H1 (cell line): ENCODE measurements at regions of chr3 and their contacts with region 1.

Region 1: GRCh38 chr3:148880681-148881080 is 15.6 kb downstream of the CPA3 start:
- DNase-seq: no peak
- H3K4me3 ChIP-seq: no peak overlapping the region
- H3K27ac ChIP-seq: no peak overlapping the region
- H3K4me1 ChIP-seq: no peaks in the 10 kb centered on the region
- H3K27me3 ChIP-seq: no peaks in the 10 kb centered on the region
- CTCF ChIP-seq: peak in 2 of 3 experiments; percentile 55 to 68; a peak in 3 of 4 replicates
- EP300 ChIP-seq: no peak
- POLR2A ChIP-seq: no peak
- RAD21 ChIP-seq: peak; percentile 83 to 85

Region 2: DNA sequence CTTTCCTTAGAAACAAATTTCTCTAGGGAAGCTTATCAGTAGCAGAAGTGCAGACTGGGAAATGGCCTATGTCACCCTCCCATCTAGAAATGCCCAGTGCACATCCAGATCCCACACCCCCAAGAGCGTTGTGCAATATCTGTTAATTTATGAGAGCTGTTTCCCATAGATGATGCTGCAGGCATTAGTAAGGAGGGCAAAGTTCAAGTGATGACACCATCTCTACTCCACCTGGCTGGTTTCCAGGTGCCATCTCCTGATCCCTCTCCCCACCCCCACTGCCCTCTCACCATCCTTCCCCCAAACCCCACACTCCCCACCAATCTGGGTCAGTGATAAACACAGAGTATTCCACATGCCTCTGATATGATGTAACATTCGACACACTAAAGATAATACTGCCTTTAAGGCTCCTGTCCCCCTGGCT is 143.6 kb before region 1 on chr3:
- CTCF ChIA-PET with region 1: interaction called, 17 read pairs
- POLR2A ChIA-PET with region 1: no interaction called
- DNase-seq: no peak
- H3K4me3 ChIP-seq: no peak overlapping the region
- H3K27ac ChIP-seq: no peak overlapping the region
- H3K4me1 ChIP-seq: no peaks in the 10 kb centered on the region
- H3K27me3 ChIP-seq: no peaks in the 10 kb centered on the region
- CTCF ChIP-seq: no peak
- EP300 ChIP-seq: no peak
- POLR2A ChIP-seq: no peak
- RAD21 ChIP-seq: no peak

Region 3: DNA sequence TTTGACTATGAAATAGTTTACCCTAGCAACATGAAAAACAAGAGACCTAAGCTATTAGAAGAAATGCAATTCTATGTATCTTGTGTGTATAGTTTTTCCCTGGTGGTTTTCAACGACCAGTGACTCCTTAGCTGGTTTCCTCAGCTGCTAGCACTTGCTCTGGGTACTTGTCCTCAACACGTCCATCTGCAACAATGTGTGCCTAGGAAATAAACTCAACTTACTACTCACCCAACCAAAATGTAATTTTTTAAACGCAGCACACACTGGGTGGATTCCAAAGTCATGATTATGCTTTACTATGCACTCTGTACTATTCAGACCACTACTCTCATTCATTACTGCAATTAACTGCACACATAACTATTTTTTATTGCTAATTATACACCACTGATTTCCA is 15.4 kb after region 1 on chr3:
- CTCF ChIA-PET with region 1: interaction called, 15 read pairs
- POLR2A ChIA-PET with region 1: no interaction called
- DNase-seq: no peak
- H3K4me3 ChIP-seq: no peak overlapping the region
- H3K27ac ChIP-seq: no peak overlapping the region
- H3K4me1 ChIP-seq: no peaks in the 10 kb centered on the region
- H3K27me3 ChIP-seq: no peaks in the 10 kb centered on the region
- CTCF ChIP-seq: no peak
- EP300 ChIP-seq: no peak
- POLR2A ChIP-seq: no peak
- RAD21 ChIP-seq: no peak